ENCODE measurements at regions of chr14 and their contacts with region 1.

Region 1: DNA sequence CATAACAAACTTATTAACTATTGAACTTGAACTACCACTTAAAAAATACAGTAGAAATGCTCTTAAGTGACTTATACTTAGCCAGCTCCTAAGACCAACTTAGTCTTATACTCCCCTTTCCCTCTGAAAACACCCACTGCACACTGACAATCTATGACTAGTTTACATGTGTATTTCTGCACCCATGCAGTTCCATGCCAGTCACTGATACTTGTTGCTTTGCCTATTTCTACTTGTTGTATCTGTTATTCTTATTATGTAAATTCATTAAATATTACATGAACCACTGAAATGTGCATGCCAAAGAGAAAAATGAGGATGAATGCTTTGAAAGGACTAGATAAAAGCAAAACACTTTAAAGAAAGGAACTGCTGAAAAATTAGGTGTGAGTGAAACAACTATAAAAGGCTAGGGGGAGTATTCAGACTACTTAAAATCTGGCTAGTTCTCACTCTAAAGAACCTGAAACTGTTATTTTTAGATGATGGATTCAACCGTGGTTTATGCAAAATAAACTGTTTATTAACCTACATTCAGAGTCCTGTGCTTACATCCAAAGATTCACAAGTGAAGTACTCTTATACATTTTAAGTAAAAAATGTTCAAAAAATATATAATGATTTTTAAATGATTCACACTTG is 74.7 kb downstream of the RPS6KA5 start:
- DNase-seq: no peak
- ATAC-seq: peak; percentile 86
- H3K4me3 ChIP-seq: no peak overlapping the region
- H3K27ac ChIP-seq: no peak overlapping the region
- H3K4me1 ChIP-seq: peaks cover 14% of the 10 kb centered on the region
- H3K27me3 ChIP-seq: no peaks in the 10 kb centered on the region
- CTCF ChIP-seq: no peak; a peak in 1 of 6 replicates
- EP300 ChIP-seq: no peak
- POLR2A ChIP-seq: no peak
- RAD21 ChIP-seq: peak; percentile 52

Region 2: DNA sequence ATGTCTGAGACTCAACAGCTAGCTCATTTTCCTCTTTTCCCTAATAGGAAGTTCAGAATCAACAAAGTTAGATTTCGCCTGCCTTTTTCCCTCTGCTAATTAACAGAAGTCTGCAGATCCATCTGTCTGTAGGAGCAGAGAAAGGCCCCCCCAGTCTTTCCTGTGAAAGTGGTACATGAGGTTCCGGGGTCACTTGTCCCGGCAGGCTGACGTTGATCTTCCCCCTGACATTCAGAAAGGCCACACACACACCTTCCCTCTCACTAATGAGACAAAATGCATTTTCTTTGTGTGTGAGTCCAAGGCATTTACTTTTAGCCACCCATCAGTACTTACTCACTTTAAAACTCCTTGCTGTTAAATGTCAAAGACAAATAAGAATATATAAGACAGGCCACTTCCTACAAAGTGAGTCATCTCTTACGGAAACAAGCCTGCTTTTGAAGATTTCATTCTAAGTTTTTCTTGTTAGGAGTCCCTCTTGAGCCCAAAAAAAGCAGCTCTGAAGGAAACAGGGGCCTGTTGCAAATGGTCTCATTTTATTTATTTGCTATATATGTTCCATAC is 308.2 kb before region 1 on chr14:
- CTCF ChIA-PET with region 1: no interaction called
- POLR2A ChIA-PET with region 1: no interaction called
- RAD21 ChIA-PET with region 1: no interaction called
- SMC1A ChIA-PET with region 1: no interaction called
- in situ Hi-C with region 1: no loop called
- intact Hi-C with region 1: no loop called
- DNase-seq: no peak
- ATAC-seq: no peak
- H3K4me3 ChIP-seq: no peak overlapping the region
- H3K27ac ChIP-seq: no peak overlapping the region
- H3K4me1 ChIP-seq: no peaks in the 10 kb centered on the region
- H3K27me3 ChIP-seq: peaks cover 2 to 3% of the 10 kb centered on the region in 2 experiments; a peak in 3 of 4 replicates
- CTCF ChIP-seq: no peak
- EP300 ChIP-seq: no peak
- POLR2A ChIP-seq: no peak
- RAD21 ChIP-seq: no peak

Region 3: DNA sequence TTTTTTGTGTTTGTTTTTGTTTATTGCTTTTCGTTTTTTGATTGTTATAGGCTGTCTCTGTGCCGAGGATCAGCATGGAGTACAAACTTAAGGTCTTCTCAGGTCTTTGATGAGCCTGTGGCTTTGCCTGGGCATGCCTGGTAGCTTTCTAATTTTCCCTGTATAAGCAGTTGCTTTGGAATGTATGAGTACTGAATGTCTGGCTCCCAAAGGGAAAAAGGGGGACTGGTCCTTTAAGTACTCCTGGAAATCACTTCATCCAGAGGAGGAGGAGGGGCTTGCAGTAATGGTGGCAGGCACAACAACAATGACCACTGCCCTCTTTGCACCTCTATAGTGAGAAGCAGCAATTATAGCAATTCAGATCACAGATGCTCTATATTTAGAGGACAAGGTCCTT is 101.9 kb before region 1 on chr14:
- CTCF ChIA-PET with region 1: no interaction called
- POLR2A ChIA-PET with region 1: no interaction called
- RAD21 ChIA-PET with region 1: no interaction called
- SMC1A ChIA-PET with region 1: no interaction called
- in situ Hi-C with region 1: no loop called
- intact Hi-C with region 1: no loop called
- DNase-seq: no peak
- ATAC-seq: no peak
- H3K4me3 ChIP-seq: no peak overlapping the region
- H3K27ac ChIP-seq: no peak overlapping the region
- H3K4me1 ChIP-seq: no peaks in the 10 kb centered on the region
- H3K27me3 ChIP-seq: no peaks in the 10 kb centered on the region
- CTCF ChIP-seq: no peak
- EP300 ChIP-seq: no peak
- POLR2A ChIP-seq: no peak
- RAD21 ChIP-seq: no peak

Region 4: DNA sequence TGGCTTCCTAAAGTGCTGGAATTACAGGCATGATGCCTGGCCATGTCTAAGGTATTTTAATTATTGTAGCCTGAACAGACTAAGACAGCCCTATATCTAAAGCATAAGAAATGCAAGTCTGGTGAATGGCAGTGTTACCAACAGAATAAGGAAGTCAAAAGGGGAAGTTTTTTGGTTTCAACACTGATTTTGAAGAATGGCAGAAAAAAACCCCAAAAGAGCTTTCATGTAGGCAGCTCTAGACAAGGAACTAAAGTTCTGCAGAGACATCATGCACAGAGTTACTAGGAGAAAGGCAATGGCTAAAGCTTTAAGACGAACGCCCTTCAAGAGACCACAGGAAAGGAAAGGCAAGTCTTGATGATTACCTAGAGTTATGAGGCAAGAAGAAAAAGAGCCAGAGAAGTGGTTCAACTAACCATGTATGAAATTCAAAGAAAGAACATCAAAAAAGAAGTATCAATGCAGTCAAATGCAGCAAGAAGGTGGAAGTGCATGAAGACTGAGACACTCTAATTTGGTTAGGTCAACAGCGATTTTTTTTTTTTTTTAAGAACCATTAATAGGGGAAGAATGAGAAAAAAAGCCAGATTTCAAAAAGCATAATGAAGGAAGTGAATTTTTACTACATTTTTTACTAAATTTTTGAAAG is 23.9 kb after region 1 on chr14:
- CTCF ChIA-PET with region 1: interaction called, 3 read pairs
- POLR2A ChIA-PET with region 1: no interaction called
- RAD21 ChIA-PET with region 1: no interaction called
- SMC1A ChIA-PET with region 1: interaction called, 14 read pairs
- in situ Hi-C with region 1: no loop called
- intact Hi-C with region 1: no loop called
- DNase-seq: peak; percentile 85
- ATAC-seq: peak; percentile 92
- H3K4me3 ChIP-seq: peak overlapping the region; percentile 37
- H3K27ac ChIP-seq: peak overlapping the region; percentile 78
- H3K4me1 ChIP-seq: peaks cover 30% of the 10 kb centered on the region
- H3K27me3 ChIP-seq: no peaks in the 10 kb centered on the region
- CTCF ChIP-seq: no peak
- EP300 ChIP-seq: peak; percentile 23 to 32; a peak in 1 of 4 replicates
- POLR2A ChIP-seq: no peak
- RAD21 ChIP-seq: peak; percentile 2; the same call in 1 of the 2 replicates

Region 5: DNA sequence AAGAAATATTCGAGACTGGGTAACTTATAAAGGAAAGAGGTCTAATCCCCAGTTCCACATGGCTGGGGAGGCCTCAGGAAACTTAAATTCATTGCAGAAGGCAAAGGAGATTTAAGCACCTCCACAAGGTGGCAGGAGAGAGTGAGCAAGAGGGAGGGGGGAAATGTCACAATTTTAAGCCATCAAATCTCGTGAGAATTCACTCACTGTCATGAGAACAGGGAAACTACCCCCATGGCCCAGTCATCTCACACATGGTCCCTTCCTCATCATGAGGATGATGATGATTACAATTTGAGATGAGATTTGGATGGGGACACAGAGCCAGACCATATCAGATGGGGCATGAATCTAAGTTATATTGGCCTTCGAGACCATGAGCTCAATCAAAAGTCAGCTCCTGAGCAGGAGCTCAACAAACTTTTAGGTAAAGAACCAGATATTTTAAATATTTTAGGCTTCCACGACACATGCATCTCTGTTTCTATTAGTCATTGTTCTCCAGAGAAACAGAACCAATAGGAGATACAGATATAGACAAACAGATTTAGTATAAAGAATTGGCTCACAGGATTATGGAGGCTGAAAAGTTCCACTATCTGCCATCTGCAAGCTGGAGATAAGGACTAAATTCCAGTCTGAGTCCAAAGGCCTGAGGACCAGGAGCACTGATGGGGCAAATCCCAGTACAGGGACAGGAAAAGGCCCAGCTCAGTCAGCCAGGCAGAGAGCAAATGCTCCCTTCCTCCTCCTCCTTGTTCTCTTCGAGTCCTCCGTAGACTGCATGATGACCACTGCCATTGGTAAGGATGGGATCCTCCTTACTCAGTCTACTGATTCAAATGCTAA is 153.0 kb after region 1 on chr14:
- CTCF ChIA-PET with region 1: interaction called, 6 read pairs
- POLR2A ChIA-PET with region 1: no interaction called
- RAD21 ChIA-PET with region 1: interaction called, 3 read pairs
- SMC1A ChIA-PET with region 1: interaction called, 5 read pairs
- in situ Hi-C with region 1: no loop called
- intact Hi-C with region 1: loop called (anchors 10 kb)
- DNase-seq: no peak
- ATAC-seq: peak; percentile 70
- H3K4me3 ChIP-seq: no peak overlapping the region
- H3K27ac ChIP-seq: no peak overlapping the region
- H3K4me1 ChIP-seq: peaks cover 14% of the 10 kb centered on the region
- H3K27me3 ChIP-seq: no peaks in the 10 kb centered on the region
- CTCF ChIP-seq: peak; percentile 47 to 61 (median 49)
- EP300 ChIP-seq: no peak
- POLR2A ChIP-seq: no peak
- RAD21 ChIP-seq: peak; percentile 53

Measured in GM12878 (cell line).